Sigmoid colon (tissue), 7 donors: ENCODE measurements at regions of chr19 and their contacts with region 1.

Region 1: DNA sequence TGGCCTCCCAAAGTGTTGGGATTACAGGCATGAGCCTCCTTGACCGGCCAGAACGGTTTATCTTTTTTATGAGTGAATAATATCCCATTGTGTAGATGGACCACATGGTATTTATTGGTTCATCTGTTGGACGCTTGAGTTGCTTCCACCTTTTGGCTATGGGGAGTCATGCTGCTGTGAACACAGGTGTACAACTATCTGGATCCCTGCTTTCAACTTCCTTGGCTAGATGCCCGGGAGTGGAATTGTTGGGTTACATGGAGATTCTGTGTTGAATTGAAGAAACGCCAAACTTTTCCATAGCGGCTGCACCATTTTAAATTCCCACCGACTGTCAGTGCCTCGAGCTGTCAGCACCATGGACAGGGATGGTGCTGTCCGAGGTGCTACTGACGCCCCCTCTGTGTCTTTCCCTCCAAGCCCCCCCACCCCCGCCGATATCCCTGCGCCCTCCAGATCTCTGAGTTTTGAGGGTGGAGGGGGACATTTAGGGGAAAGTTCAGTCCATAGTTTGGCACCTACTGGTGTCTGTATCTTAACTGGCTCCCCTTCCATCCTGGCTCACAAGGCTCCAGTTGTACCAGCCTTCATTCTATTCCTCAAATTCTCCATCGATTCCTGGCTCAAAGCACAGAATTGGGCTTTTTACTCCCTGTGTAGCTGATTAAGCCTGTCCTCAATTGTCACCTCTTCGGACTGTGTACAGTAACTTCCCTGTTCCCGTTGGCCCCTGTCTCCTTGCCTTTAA is 27.3 kb downstream of the PNPLA6 start:
- DNase-seq: no peak
- H3K4me3 ChIP-seq: no peak overlapping the region
- H3K27ac ChIP-seq: no peak overlapping the region
- H3K4me1 ChIP-seq: no peaks in the 10 kb centered on the region
- H3K27me3 ChIP-seq: no peaks in the 10 kb centered on the region
- CTCF ChIP-seq: no peak
- EP300 ChIP-seq: no peak
- POLR2A ChIP-seq: no peak

Region 2: GRCh38 chr19:7482584-7483439 is 80.0 kb before region 1 on chr19:
- intact Hi-C with region 1: no loop called
- DNase-seq: no peak
- H3K4me3 ChIP-seq: no peak overlapping the region
- H3K27ac ChIP-seq: no peak overlapping the region
- H3K4me1 ChIP-seq: peaks cover 0 to 21% (median 16%) of the 10 kb centered on the region in 4 donors
- H3K27me3 ChIP-seq: no peaks in the 10 kb centered on the region
- CTCF ChIP-seq: no peak
- EP300 ChIP-seq: no peak
- POLR2A ChIP-seq: no peak

Region 3: GRCh38 chr19:7799640-7800355 is 237.0 kb after region 1 on chr19:
- intact Hi-C with region 1: loop called (anchors 2 kb)
- DNase-seq: peak; percentile 76
- H3K4me3 ChIP-seq: peak overlapping the region in 1 of 4 donors; percentile 15
- H3K27ac ChIP-seq: no peak overlapping the region
- H3K4me1 ChIP-seq: peaks cover 0 to 4% (median 0%) of the 10 kb centered on the region in 4 donors
- H3K27me3 ChIP-seq: peaks cover 4 to 80% (median 35%) of the 10 kb centered on the region in 3 donors
- CTCF ChIP-seq: peak in 3 of 4 experiments; percentile 33 to 42 (median 38)
- EP300 ChIP-seq: no peak
- POLR2A ChIP-seq: no peak

Region 4: GRCh38 chr19:7997809-7998480 is 435.1 kb after region 1 on chr19:
- intact Hi-C with region 1: loop called (anchors 10 kb)
- DNase-seq: no peak
- H3K4me3 ChIP-seq: no peak overlapping the region
- H3K27ac ChIP-seq: no peak overlapping the region
- H3K4me1 ChIP-seq: peaks cover 0 to 66% (median 59%) of the 10 kb centered on the region in 4 donors
- H3K27me3 ChIP-seq: no peaks in the 10 kb centered on the region
- CTCF ChIP-seq: no peak
- EP300 ChIP-seq: no peak
- POLR2A ChIP-seq: no peak